ENCODE measurements at regions of chr7 and their contacts with region 1.

Region 1: DNA sequence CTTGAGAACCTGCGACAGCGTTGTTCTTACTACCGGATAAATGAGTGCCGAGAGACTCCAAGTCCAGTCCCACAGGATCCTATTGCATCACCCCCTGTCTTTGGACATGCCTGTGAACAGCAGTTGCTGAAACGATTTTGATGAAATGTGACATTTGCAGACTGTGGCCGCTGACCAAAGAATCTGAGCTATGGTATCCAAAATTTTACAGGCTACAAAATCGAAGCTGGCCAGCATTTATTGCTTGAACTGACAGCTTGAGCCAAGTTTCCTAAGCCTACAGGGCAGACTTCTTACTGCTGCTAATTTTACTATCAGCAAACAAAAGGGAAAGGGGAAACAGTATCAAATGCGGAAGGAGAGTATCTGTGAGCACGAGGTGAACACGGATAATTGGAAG is 12.1 kb upstream of the NPVF start:
- DNase-seq: no peak
- H3K4me3 ChIP-seq: no peak overlapping the region
- H3K27ac ChIP-seq: no peak overlapping the region
- H3K4me1 ChIP-seq: peaks cover 0 to 9% (median 5%) of the 10 kb centered on the region in 4 donors
- H3K27me3 ChIP-seq: no peaks in the 10 kb centered on the region
- CTCF ChIP-seq: no peak
- EP300 ChIP-seq: no peak
- POLR2A ChIP-seq: no peak

Region 2: DNA sequence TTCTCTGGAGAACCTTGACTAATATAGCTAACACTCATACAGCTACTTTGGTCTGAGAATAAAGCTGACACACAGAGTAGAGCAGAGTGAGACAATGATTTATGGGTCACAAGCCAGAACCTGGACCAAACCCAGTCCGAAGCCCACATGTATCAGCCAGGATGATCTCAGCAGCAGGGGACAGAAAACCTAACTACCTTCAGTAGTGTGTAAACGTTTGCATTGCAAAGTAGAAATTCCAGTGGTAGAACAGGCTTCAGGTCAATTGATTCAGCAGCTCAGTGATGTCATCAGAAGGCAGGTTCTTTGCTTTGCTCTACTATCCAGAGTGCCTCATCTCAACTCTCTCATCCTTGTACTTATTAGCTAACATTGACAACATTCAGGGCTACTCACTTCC is 729.6 kb before region 1 on chr7:
- in situ Hi-C with region 1: no loop called
- intact Hi-C with region 1: loop called (anchors 5 kb)
- DNase-seq: no peak
- H3K4me3 ChIP-seq: no peak overlapping the region
- H3K27ac ChIP-seq: no peak overlapping the region
- H3K4me1 ChIP-seq: no peaks in the 10 kb centered on the region
- H3K27me3 ChIP-seq: no peaks in the 10 kb centered on the region
- CTCF ChIP-seq: no peak
- EP300 ChIP-seq: no peak
- POLR2A ChIP-seq: no peak

Region 3: GRCh38 chr7:25272265-25272664 is 31.9 kb after region 1 on chr7:
- in situ Hi-C with region 1: no loop called
- intact Hi-C with region 1: no loop called
- DNase-seq: no peak
- H3K4me3 ChIP-seq: no peak overlapping the region
- H3K27ac ChIP-seq: no peak overlapping the region
- H3K4me1 ChIP-seq: no peaks in the 10 kb centered on the region
- H3K27me3 ChIP-seq: no peaks in the 10 kb centered on the region
- CTCF ChIP-seq: no peak
- EP300 ChIP-seq: no peak
- POLR2A ChIP-seq: no peak

Measured in transverse colon (tissue), 4 donors.